ENCODE measurements at regions of chr12 and their contacts with region 1.

Region 1: GRCh38 chr12:108664338-108665258 is 30.9 kb upstream of the SELPLG start:
- DNase-seq: peak; percentile 82 to 94
- ATAC-seq: peak; percentile 91 to 93
- H3K4me3 ChIP-seq: no peak overlapping the region
- H3K27ac ChIP-seq: peak overlapping the region; percentile 50 to 78
- H3K4me1 ChIP-seq: peaks cover 59% of the 10 kb centered on the region
- CTCF ChIP-seq: peak; percentile 94
- EP300 ChIP-seq: no peak
- POLR2A ChIP-seq: no peak
- RAD21 ChIP-seq: peak; percentile 98 to 99

Region 2: DNA sequence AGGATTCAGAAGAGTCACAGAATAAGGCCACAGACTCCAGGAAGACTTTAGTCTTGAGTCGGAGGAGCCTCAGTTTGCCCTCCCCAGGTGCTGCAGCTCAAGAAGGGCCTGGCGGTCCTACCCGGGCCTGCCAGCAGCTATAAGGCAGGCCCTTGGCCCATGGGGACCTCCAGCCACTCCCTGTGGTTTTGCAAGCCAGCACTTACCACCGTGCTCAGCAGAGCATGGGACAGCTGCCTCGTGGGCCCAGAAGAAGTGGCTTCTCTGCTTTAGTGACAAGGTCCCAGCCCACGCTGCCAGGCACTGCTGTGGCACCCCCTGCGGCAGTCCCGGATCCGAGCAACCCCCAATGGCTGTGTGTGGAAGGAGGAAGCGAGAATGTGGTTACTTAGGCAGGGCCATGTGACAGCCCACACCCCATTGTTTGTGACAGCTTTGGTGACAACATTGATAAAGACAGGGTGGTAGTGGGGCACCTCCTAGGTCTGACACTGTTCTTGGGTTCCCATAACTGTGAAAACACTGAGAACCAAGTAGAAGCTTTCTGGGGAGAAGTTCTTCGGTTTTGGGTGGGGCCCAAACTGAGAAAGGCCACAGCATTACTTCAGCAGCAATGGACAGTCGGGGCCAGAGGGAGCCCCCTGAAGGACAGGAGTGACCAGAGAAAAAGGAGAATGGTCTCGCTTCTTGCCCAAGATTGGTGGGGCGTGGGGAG is 30.9 kb before region 1 on chr12 and contains the start of gene SELPLG:
- CTCF ChIA-PET with region 1: interaction called, 14 read pairs
- POLR2A ChIA-PET with region 1: no interaction called
- DNase-seq: no peak
- ATAC-seq: no peak
- H3K4me3 ChIP-seq: no peak within 1 kb of the TSS
- H3K27ac ChIP-seq: peak within 1 kb of the TSS; percentile 41 to 60; a peak in 5 of 6 replicates
- H3K4me1 ChIP-seq: peaks cover 35% of the 10 kb centered on the region
- CTCF ChIP-seq: no peak
- EP300 ChIP-seq: no peak
- POLR2A ChIP-seq: no peak
- RAD21 ChIP-seq: no peak
- polyA plus RNA-seq, gene SELPLG: 0.17 and 0.24 TPM in 2 replicates

Region 3: GRCh38 chr12:108678104-108678730 is 13.6 kb after region 1 on chr12:
- CTCF ChIA-PET with region 1: interaction called, 127 read pairs
- POLR2A ChIA-PET with region 1: no interaction called
- DNase-seq: no peak
- ATAC-seq: peak in 1 of 2 experiments; percentile 34; a peak in 2 of 6 replicates
- H3K4me3 ChIP-seq: no peak overlapping the region
- H3K27ac ChIP-seq: no peak overlapping the region
- H3K4me1 ChIP-seq: peaks cover 10% of the 10 kb centered on the region; the same call in 2 of the 3 replicates
- CTCF ChIP-seq: no peak
- EP300 ChIP-seq: no peak
- POLR2A ChIP-seq: no peak
- RAD21 ChIP-seq: no peak

Region 4: GRCh38 chr12:108722992-108723766 is 58.6 kb after region 1 on chr12:
- CTCF ChIA-PET with region 1: interaction called, 35 read pairs
- POLR2A ChIA-PET with region 1: interaction called, 3 read pairs
- DNase-seq: peak; percentile 46 to 65
- ATAC-seq: peak; percentile 42 to 66
- H3K4me3 ChIP-seq: peak overlapping the region; percentile 22; the same call in 2 of the 3 replicates
- H3K27ac ChIP-seq: peak overlapping the region; percentile 65 to 88
- H3K4me1 ChIP-seq: peaks cover 96% of the 10 kb centered on the region
- CTCF ChIP-seq: no peak
- EP300 ChIP-seq: peak in 1 of 2 experiments; percentile 28; a peak in 1 of 5 replicates
- POLR2A ChIP-seq: no peak
- RAD21 ChIP-seq: peak; percentile 11 to 13; a peak in 2 of 5 replicates

Region 5: DNA sequence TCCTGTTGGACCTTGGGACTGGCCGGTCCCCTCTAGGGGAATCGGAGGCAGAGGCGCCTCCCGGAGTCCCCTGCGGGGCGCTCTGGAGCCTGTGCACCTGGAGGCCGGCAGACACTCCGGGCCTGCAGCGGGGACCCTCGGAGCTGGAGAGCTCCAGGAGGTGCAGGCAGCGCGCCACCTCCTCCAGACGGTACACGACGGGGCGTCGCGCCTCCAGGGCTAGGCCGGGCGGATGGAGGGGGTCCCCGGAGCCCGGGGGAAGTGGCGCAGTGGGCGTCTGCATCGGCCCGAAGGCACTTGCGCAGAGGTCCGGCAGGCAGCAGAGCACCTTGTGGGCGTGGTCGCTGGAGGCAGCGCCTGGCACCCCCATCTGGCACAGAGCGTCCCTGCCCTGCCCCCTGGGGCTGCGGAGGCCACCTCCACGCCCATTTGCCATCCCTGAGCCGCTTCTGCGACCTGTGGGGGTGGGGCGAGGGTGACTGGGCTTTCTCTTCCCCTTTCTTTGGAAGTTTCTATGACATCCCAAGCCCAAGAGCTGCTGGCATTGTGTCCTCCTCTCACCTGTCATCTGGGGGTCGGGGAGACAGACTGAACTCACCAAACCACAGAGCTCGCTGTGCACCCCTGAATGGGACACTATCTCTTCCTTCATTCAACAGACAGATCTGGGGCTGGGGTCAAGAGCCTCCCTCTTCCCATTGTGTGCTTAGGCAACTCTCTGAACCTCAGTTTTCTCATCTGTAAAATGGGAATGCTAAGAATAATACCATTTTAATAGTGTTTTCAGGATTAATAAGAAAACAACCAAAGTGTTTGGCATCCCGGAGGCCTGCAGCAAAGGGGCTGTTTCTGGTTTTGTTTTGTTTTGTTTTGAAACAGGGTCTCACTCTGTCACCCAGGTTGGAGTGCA is 104.2 kb after region 1 on chr12:
- CTCF ChIA-PET with region 1: interaction called, 13 read pairs
- POLR2A ChIA-PET with region 1: no interaction called
- DNase-seq: peak; percentile 71 to 84
- ATAC-seq: peak; percentile 81 to 87
- H3K4me3 ChIP-seq: peak overlapping the region; percentile 42
- H3K27ac ChIP-seq: peak overlapping the region; percentile 61 to 80; a peak in 5 of 6 replicates
- H3K4me1 ChIP-seq: peaks cover 9% of the 10 kb centered on the region
- CTCF ChIP-seq: no peak; the same call in 2 of the 3 replicates
- EP300 ChIP-seq: no peak
- POLR2A ChIP-seq: no peak
- RAD21 ChIP-seq: 0 out of 5 replicates have a peak, but pooled peaks of 1 of the 2 experiments have one; percentile 18

Region 6: DNA sequence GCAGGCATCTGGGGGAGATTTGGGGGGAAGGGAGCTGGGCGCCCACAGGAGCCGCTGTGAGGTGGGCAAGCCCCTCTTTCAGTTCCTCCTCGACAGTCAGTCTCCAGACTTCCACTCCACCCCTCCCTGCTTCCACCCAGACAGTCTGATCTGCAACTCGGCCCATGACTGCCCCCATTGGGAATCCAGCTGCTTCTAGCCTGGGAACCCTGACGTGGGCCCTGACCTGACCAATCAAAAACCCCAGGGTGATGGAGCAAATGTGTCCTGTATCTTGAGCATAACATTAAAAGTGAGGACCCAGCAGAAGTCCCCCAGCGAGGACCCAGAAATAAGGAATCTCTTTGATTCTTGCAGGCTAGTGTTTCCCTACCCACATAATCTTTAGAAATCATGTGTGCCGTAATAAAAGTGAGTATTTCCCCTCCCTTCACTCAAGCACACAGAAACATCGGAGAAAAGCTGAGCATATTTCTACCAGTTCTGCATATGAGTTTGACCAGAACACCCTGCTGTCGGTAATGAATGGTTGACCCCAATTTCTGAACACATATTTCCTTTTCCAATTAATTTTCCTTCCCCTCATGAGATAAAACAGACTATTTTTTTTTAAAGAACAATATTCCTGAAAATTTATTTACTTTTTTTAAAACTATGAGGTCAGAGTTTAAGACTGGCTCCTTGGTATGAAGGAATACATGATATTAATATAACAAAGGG is 186.4 kb after region 1 on chr12:
- CTCF ChIA-PET with region 1: interaction called, 16 read pairs
- POLR2A ChIA-PET with region 1: no interaction called
- DNase-seq: peak; percentile 89 to 92
- ATAC-seq: peak; percentile 62 to 81
- H3K4me3 ChIP-seq: no peak overlapping the region; the same call in 2 of the 3 replicates
- H3K27ac ChIP-seq: peak overlapping the region; percentile 95
- H3K4me1 ChIP-seq: peaks cover 81% of the 10 kb centered on the region
- CTCF ChIP-seq: peak; percentile 34
- EP300 ChIP-seq: no peak
- POLR2A ChIP-seq: no peak
- RAD21 ChIP-seq: peak in 1 of 2 experiments; percentile 48; a peak in 3 of 5 replicates